ENCODE measurements at regions of chr9 and their contacts with region 1.

Region 1: DNA sequence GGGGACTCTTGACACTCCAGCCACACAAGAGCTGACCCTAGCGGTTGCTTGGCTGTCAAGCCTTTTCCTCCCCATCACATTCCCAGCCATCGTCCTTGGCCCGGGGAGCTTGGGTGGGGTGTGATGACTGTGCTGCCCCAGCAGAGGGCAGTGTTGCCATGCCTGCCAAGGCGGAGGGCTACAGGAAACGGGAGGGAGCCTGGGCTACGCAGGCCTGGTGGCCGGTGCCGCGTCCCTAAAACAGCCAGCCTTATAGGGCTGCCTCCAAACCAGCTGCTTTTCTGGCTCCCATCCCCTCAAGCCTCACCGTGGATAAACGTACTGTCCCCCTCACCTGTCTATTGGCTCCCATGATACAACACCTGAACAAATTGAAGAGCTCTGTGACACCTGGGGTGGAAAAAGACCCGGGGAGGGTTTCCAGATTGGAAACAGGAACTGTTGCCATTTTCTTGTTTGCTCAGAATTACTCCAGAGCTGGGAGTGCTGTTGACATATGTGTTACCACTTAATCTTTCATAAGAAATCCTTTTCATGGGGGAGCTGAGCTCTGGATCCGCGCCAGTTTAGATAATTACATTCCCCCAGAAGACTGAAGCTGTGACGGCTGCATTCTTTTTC is 72.8 kb upstream of the ASTN2 start:
- DNase-seq: peak; percentile 65
- H3K4me3 ChIP-seq: no peak overlapping the region
- H3K27ac ChIP-seq: no peak overlapping the region
- H3K4me1 ChIP-seq: no peaks in the 10 kb centered on the region
- H3K27me3 ChIP-seq: no peaks in the 10 kb centered on the region
- CTCF ChIP-seq: peak; percentile 89 to 97

Region 2: DNA sequence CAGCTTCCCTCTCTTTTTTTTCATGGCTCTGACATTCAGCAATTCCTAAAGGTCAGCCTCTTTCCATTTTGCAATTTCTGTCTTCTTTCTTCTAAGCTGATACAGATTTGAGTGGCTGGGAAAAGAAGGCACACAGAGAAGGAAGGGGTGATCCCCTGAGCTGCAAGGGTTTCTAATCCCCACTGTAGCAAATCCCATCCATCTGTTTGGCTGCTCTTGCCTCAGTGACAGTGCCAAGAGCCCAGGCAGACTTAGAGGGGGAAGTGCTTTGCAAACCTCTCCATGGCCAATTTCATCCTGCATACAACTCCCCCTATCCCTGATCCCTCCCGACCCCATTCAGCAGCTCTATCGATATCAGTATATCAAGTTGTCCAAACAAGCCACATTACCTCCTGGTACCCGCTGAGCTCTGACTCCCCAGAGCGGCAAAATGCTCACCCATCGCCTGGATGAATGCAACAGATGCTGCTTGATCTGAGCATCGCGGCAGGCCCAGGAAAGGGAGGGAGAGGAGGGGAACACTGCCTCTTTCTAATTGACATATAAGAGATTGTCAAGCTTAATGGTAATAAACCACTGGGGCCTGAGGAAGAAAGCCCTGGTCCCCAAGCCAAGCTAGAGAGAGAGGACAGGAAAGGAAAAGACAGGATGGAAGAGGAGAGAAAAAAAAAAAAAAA is 341.7 kb before region 1 on chr9:
- CTCF ChIA-PET with region 1: no interaction called
- dilution Hi-C with region 1: no loop called
- in situ Hi-C with region 1: no loop called
- intact Hi-C with region 1: no loop called
- DNase-seq: no peak
- H3K4me3 ChIP-seq: no peak overlapping the region
- H3K27ac ChIP-seq: no peak overlapping the region
- H3K4me1 ChIP-seq: no peaks in the 10 kb centered on the region
- H3K27me3 ChIP-seq: no peaks in the 10 kb centered on the region
- CTCF ChIP-seq: no peak

Region 3: DNA sequence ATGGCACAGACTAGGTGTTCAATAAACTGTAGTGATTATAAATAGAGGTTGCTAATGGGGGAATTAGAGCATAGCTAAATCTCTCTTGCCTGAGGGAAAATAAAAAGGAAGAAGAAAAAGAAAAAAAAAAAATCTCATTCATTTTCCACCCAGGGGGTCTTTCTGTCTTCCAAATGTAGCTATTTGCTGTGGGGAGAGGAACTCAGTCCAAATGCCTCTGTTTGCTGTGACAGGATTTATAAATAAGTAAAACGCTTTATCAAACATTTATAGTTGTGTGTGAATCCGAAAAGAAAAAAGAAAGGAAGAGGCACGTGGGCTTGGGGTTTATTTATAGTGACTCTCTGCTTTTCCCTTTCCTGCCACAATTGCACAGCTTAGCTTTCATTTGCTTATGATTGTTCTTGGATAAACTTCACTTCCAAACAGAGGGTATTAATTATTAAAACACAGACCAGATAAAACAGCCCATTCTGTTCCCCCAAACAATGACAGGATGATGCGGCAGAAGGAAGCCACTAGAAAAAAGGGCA is 318.5 kb before region 1 on chr9:
- CTCF ChIA-PET with region 1: no interaction called
- dilution Hi-C with region 1: no loop called
- in situ Hi-C with region 1: no loop called
- intact Hi-C with region 1: no loop called
- DNase-seq: no peak
- H3K4me3 ChIP-seq: no peak overlapping the region
- H3K27ac ChIP-seq: no peak overlapping the region
- H3K4me1 ChIP-seq: no peaks in the 10 kb centered on the region
- H3K27me3 ChIP-seq: no peaks in the 10 kb centered on the region
- CTCF ChIP-seq: no peak

Region 4: GRCh38 chr9:117555964-117556629 is 68.4 kb after region 1 on chr9:
- CTCF ChIA-PET with region 1: no interaction called
- dilution Hi-C with region 1: no loop called
- in situ Hi-C with region 1: no loop called
- intact Hi-C with region 1: loop called (anchors 1 kb)
- DNase-seq: peak; percentile 40
- H3K4me3 ChIP-seq: no peak overlapping the region
- H3K27ac ChIP-seq: no peak overlapping the region
- H3K4me1 ChIP-seq: no peaks in the 10 kb centered on the region
- H3K27me3 ChIP-seq: no peaks in the 10 kb centered on the region
- CTCF ChIP-seq: peak; percentile 77 to 79